ENCODE measurements at regions of chr15 and their contacts with region 1.

Region 1: GRCh38 chr15:92845126-92845508 is 55.0 kb upstream of the CHD2 start:
- DNase-seq: peak in 3 of 14 experiments; percentile 76 to 84 (median 81)
- ATAC-seq: peak; percentile 46
- H3K4me3 ChIP-seq: peak overlapping the region; percentile 31
- H3K4me3 Mint-ChIP-seq: peak overlapping the region; percentile 88
- H3K27ac ChIP-seq: peak overlapping the region; percentile 37 to 75
- H3K27ac Mint-ChIP-seq: peak overlapping the region; percentile 91
- H3K4me1 ChIP-seq: peaks cover 79% of the 10 kb centered on the region
- H3K4me1 Mint-ChIP-seq: peaks cover 63% of the 10 kb centered on the region
- H3K27me3 ChIP-seq: no peaks in the 10 kb centered on the region
- H3K27me3 Mint-ChIP-seq: no peaks in the 10 kb centered on the region
- CTCF ChIP-seq: no peak

Region 2: GRCh38 chr15:91965501-91966184 is 879.5 kb before region 1 on chr15:
- CTCF ChIA-PET with region 1: no interaction called
- POLR2A ChIA-PET with region 1: no interaction called
- intact Hi-C with region 1: no loop called
- DNase-seq: no peak
- ATAC-seq: no peak
- H3K4me3 ChIP-seq: no peak overlapping the region
- H3K4me3 Mint-ChIP-seq: no peak overlapping the region
- H3K27ac ChIP-seq: no peak overlapping the region
- H3K27ac Mint-ChIP-seq: no peak overlapping the region
- H3K4me1 ChIP-seq: peaks cover 13% of the 10 kb centered on the region
- H3K4me1 Mint-ChIP-seq: peaks cover 38% of the 10 kb centered on the region
- H3K27me3 ChIP-seq: no peaks in the 10 kb centered on the region
- H3K27me3 Mint-ChIP-seq: no peaks in the 10 kb centered on the region
- CTCF ChIP-seq: no peak

Region 3: GRCh38 chr15:92820236-92821021 is 24.7 kb before region 1 on chr15:
- CTCF ChIA-PET with region 1: interaction called, 3 read pairs
- POLR2A ChIA-PET with region 1: interaction called, 16 read pairs
- intact Hi-C with region 1: no loop called
- DNase-seq: peak; percentile 69 to 94 (median 82)
- ATAC-seq: peak; percentile 81
- H3K4me3 ChIP-seq: peak overlapping the region; percentile 63
- H3K4me3 Mint-ChIP-seq: peak overlapping the region; percentile 88
- H3K27ac ChIP-seq: peak overlapping the region; percentile 82 to 91
- H3K27ac Mint-ChIP-seq: peak overlapping the region; percentile 79
- H3K4me1 ChIP-seq: peaks cover 52% of the 10 kb centered on the region
- H3K4me1 Mint-ChIP-seq: peaks cover 55% of the 10 kb centered on the region
- H3K27me3 ChIP-seq: no peaks in the 10 kb centered on the region
- H3K27me3 Mint-ChIP-seq: no peaks in the 10 kb centered on the region
- CTCF ChIP-seq: no peak

Measured in CD4-positive, alpha-beta T cell (primary cell).